Activated CD8-positive, alpha-beta memory T cell treated with anti-CD3 and anti-CD28 coated beads, Interleukin-2, amount 10 ng/mL, durations not matched to agents 7 days and 5 days (primary cell): ENCODE measurements at regions of chr5 and their contacts with region 1.

Region 1: DNA sequence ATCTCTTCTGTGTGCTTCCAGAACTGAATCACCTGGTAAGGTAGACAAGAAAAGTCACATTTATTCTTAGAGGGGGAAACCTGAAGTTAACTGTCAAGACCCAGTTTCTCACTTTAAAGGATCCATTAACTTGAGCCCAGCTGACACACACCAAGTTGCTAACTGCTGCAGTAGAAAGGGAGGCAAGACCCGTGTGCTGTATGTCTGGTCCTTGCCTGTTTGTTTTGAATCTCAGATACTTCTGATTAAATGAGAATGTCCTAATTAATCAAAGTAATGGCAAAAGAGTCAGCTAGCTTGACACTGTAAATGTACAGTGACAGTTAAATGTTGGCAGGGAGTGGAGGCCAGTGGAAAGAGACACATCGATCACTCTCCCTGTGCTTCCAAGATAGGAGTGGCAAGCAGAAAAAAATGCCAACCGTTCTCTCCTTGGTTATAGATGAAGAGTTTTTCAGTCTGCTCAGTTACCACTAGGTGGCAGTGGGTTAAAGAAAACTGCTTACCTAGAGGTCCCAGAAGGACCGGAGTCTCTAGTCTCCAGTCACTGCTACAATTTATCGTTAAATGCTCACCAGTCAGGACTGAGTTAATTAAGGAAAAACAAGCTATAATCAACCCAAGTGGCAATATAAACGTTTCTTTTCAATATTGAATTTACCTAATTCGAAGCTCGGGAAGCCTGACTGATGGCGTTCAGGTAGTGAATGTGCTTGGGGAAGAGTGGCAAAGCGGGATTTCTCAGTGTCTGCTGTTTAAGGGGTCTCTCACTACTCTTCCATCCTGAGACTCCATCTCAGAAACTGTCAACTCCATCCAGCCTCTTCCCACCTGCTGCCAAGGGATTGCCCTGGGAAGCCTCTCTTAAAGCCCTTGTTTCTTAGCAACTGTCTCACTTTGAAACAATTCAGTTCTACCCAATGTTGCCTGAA is 18.4 kb downstream of the LSM11 start:
- DNase-seq: no peak
- ATAC-seq: peak; percentile 89
- H3K4me3 Mint-ChIP-seq: no peak overlapping the region
- H3K27ac Mint-ChIP-seq: no peak overlapping the region
- H3K4me1 Mint-ChIP-seq: peaks cover 10% of the 10 kb centered on the region
- H3K27me3 Mint-ChIP-seq: no peaks in the 10 kb centered on the region

Region 2: DNA sequence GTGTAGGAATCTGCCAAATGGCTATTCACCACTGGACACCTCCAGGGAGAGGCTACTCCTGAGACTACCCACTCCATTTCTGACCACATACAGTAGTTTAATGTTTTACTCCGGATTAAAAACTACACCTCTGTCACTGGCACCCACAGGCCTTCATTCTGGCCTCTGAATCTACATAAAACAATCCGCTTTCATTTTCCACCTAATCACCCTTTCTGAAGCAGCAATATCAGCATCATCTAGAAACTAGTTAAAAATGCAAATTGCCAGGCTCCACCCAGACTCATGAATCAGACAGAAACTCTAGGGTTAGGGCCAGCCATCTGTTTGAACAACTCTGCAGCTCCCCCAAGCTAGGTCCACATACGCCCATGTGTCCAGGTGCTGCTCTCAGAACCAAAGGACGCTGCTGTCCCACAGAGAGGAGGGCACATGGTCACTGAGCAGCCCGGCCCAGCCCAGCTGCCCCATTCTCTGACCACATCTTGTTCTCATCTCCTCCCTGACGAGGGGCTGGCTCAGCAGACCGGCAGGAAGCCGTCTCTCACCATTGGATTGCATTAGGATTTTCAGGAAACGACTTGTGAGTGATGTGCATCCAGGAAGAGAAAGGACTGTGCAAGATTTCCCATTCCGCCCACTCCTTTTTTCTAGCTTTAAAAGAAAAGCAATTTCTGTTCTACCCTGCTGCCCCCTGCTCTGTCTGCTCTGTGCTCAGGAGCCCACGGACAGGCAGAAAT is 221.1 kb before region 1 on chr5:
- CTCF ChIA-PET with region 1: no interaction called
- DNase-seq: peak; percentile 80
- ATAC-seq: peak; percentile 80
- H3K4me3 Mint-ChIP-seq: peak overlapping the region; percentile 68
- H3K27ac Mint-ChIP-seq: peak overlapping the region; percentile 95
- H3K4me1 Mint-ChIP-seq: peaks cover 93% of the 10 kb centered on the region
- H3K27me3 Mint-ChIP-seq: no peaks in the 10 kb centered on the region

Region 3: GRCh38 chr5:157651623-157652549 is 110.1 kb before region 1 on chr5 and contains the start of gene SOX30:
- CTCF ChIA-PET with region 1: no interaction called
- DNase-seq: peak; percentile 88
- ATAC-seq: peak; percentile 98
- H3K4me3 Mint-ChIP-seq: peak within 1 kb of the TSS; percentile 66
- H3K27ac Mint-ChIP-seq: peak within 1 kb of the TSS; percentile 77
- H3K4me1 Mint-ChIP-seq: peaks cover 14% of the 10 kb centered on the region
- H3K27me3 Mint-ChIP-seq: peaks cover 5% of the 10 kb centered on the region
- total RNA-seq, gene SOX30: 0.09 TPM in 1 of 2 experiments, not detected in the other

Region 4: GRCh38 chr5:157948738-157949410 is 186.9 kb after region 1 on chr5:
- CTCF ChIA-PET with region 1: interaction called, 20 read pairs
- DNase-seq: peak; percentile 84
- ATAC-seq: peak; percentile 96
- H3K4me3 Mint-ChIP-seq: peak overlapping the region; percentile 0
- H3K27ac Mint-ChIP-seq: no peak overlapping the region
- H3K4me1 Mint-ChIP-seq: peaks cover 4% of the 10 kb centered on the region
- H3K27me3 Mint-ChIP-seq: peaks cover 26% of the 10 kb centered on the region